ENCODE measurements at regions of chr15 and their contacts with region 1.

Region 1: GRCh38 chr15:86677278-86677677 is 597.6 kb downstream of the AGBL1 start:
- DNase-seq: no peak
- H3K4me3 ChIP-seq: no peak overlapping the region
- H3K27ac ChIP-seq: no peak overlapping the region
- H3K4me1 ChIP-seq: no peaks in the 10 kb centered on the region
- H3K27me3 ChIP-seq: 0 out of 2 replicates have a peak, but pooled peaks cover 3% of the 10 kb centered on the region
- CTCF ChIP-seq: no peak

Region 2: DNA sequence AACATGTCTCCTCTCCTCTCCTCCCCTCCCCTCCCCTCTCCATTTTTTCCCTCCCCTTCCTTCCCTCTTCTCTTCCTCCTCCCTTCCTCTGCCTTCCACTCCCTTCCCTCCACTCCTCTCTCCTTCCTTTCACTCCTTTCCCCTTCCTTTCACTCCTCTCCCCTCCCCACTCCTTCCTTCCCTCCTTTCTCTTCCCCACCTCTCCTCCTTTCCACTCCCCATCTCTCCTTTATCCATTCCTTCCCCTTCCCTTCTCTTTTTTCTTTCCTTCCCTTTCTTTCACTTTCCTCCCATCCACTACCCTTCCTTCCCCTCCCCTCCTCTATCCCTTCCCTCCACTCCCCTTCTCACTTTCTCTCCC is 24.3 kb after region 1 on chr15:
- CTCF ChIA-PET with region 1: no interaction called
- POLR2A ChIA-PET with region 1: interaction called, 12 read pairs
- intact Hi-C with region 1: no loop called
- DNase-seq: no peak
- H3K4me3 ChIP-seq: no peak overlapping the region
- H3K27ac ChIP-seq: no peak overlapping the region
- H3K4me1 ChIP-seq: no peaks in the 10 kb centered on the region
- H3K27me3 ChIP-seq: no peaks in the 10 kb centered on the region
- CTCF ChIP-seq: no peak

Measured in PC-9 (cell line).